Motor neuron (in vitro differentiated cells): ENCODE measurements at regions of chr2 and their contacts with region 1.

Region 1: DNA sequence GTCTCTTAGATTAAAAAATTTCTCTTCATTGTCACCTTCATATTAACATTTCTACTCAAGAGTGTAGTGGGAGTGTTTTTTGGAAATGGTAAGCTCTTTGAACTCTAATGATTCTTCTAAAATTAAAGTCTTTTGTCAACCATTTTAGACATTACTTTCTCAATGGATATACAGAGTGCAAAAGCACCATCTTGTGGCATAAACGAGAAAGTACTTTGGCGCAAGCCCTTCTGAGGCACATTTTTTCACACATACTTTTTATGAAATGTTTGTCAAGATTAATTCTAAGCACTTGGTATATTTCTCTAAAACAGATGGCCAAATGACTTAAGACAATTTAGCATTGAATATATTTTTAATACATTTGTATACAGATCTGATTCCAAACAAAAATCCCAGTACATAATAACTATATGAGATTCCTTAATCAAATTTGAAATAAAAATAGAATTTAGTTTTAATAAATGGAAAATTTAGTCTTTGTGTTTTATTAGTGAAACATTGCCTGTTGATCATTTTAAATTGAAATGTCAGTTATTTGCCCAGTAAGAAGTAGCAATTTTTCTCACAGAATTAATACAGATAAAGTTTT is 63.3 kb upstream of the GALNT5 start:
- ATAC-seq: peak in 3 of 8 experiments; percentile 57 to 60 (median 57)
- H3K4me3 ChIP-seq: no peak overlapping the region
- H3K27ac ChIP-seq: no peak overlapping the region
- H3K4me1 ChIP-seq: no peaks in the 10 kb centered on the region

Region 2: GRCh38 chr2:155368934-155369333 is 1825.3 kb before region 1 on chr2:
- in situ Hi-C with region 1: loop called in 2 of 9 experiments (anchors 25 kb)
- ATAC-seq: peak in 4 of 8 experiments; percentile 19 to 52 (median 50)
- H3K4me3 ChIP-seq: no peak overlapping the region
- H3K27ac ChIP-seq: no peak overlapping the region
- H3K4me1 ChIP-seq: no peaks in the 10 kb centered on the region

Region 3: GRCh38 chr2:156908825-156909224 is 285.4 kb before region 1 on chr2:
- in situ Hi-C with region 1: loop called in 1 of 9 experiments (anchors 25 kb)
- ATAC-seq: no peak
- H3K4me3 ChIP-seq: no peak overlapping the region
- H3K27ac ChIP-seq: no peak overlapping the region
- H3K4me1 ChIP-seq: no peaks in the 10 kb centered on the region

Region 4: GRCh38 chr2:157076526-157077161 is 117.5 kb before region 1 on chr2:
- in situ Hi-C with region 1: no loop called
- ATAC-seq: no peak
- H3K4me3 ChIP-seq: no peak overlapping the region
- H3K27ac ChIP-seq: no peak overlapping the region
- H3K4me1 ChIP-seq: peaks cover 16 to 34% of the 10 kb centered on the region in 2 donors